IMR-90 (cell line): ENCODE measurements at regions of chr4 and their contacts with region 1.

Region 1: DNA sequence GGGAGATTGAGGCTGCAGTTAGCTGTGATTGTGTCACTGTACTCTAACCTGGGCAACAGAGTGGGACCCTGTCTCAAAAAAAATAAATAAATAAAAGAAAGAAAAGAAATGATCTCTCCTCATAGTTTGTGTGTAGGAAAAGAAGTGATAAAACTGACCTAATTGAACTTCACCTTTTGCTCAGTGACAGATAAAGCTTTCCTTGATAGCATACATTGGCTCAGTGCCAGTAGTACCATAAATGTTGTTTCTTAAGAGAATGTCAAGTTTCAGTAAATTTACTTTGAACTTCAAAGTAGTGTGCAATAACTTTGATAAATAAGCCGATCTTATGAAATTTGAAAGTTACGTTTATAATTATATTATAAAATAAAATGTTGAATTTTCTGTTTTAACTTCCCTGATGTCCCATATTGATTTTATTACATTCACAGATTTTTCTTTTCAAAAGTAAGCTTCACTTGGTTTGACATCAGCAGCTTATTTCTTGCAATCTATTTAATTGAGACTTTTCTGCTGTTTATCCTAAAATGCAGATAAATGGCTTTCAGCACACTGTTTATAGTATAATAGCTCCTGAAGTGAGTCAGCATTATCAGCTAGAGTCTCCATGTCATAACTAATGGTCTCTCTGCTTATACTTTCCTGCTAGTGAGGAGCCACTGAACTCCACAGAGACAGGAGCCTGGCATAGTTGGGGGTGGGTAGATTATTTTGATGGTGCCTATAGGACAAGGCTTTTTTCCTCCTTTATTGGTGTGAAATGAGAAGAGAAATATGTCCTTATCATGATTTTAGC is 330.1 kb downstream of the BMPR1B start:
- DNase-seq: peak; percentile 68
- ATAC-seq: peak; percentile 97
- H3K4me3 ChIP-seq: no peak overlapping the region
- H3K27ac ChIP-seq: no peak overlapping the region
- H3K4me1 ChIP-seq: no peaks in the 10 kb centered on the region
- H3K27me3 ChIP-seq: no peaks in the 10 kb centered on the region
- CTCF ChIP-seq: no peak
- POLR2A ChIP-seq: no peak
- RAD21 ChIP-seq: no peak

Region 2: DNA sequence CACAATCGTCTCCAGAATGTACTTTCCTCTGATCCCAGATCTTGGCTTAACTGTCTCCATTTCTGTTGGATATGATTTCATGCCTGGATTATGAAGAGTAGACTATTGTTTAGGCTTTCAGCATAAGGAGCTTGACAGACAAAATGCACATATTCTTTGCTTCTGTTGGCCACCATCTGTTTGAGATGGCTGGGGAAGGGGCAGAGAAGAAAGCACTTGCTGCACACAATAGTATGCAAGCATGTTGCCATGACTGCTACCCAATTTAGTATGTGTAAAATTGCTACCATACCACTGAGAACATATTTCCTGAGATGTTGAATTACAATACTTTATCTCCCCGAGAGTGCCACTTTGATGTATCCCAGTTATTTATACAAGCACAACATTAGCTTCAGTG is 458.0 kb before region 1 on chr4:
- CTCF ChIA-PET with region 1: no interaction called
- POLR2A ChIA-PET with region 1: no interaction called
- dilution Hi-C with region 1: no loop called
- in situ Hi-C with region 1: no loop called
- intact Hi-C with region 1: no loop called
- DNase-seq: no peak
- ATAC-seq: no peak
- H3K4me3 ChIP-seq: no peak overlapping the region
- H3K27ac ChIP-seq: no peak overlapping the region
- H3K4me1 ChIP-seq: peaks cover 3% of the 10 kb centered on the region; the same call in 1 of the 2 replicates
- H3K27me3 ChIP-seq: no peaks in the 10 kb centered on the region
- CTCF ChIP-seq: no peak
- POLR2A ChIP-seq: no peak
- RAD21 ChIP-seq: no peak

Region 3: DNA sequence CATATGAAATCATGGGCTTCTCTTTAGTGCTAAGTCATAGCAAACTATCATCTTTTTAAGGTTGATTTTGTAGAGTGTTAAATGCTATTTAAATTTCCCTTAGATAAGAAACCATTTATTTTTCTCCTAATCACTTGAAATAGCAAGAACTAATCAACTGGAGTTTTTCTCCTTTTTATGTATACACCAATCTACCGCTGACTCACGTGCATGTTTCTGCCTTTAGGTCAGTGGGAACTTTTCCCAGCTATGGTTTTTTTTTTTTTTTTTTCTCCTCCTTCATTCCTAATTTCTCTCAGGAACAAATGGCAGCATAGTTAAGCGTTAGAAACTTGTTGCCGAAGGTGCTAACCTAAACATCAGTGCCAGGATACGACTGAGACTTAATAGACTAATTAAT is 153.7 kb before region 1 on chr4:
- CTCF ChIA-PET with region 1: no interaction called
- POLR2A ChIA-PET with region 1: no interaction called
- dilution Hi-C with region 1: no loop called
- in situ Hi-C with region 1: no loop called
- intact Hi-C with region 1: loop called (anchors 2 kb)
- DNase-seq: peak; percentile 69
- ATAC-seq: peak; percentile 72
- H3K4me3 ChIP-seq: peak overlapping the region; percentile 39; the same call in 1 of the 2 replicates
- H3K27ac ChIP-seq: no peak overlapping the region
- H3K4me1 ChIP-seq: peaks cover 5% of the 10 kb centered on the region
- H3K27me3 ChIP-seq: no peaks in the 10 kb centered on the region
- CTCF ChIP-seq: no peak
- POLR2A ChIP-seq: no peak
- RAD21 ChIP-seq: no peak

Region 4: GRCh38 chr4:95114521-95114920 is 26.7 kb after region 1 on chr4:
- CTCF ChIA-PET with region 1: no interaction called
- POLR2A ChIA-PET with region 1: no interaction called
- dilution Hi-C with region 1: no loop called
- in situ Hi-C with region 1: no loop called
- intact Hi-C with region 1: no loop called
- DNase-seq: peak; percentile 1
- ATAC-seq: no peak
- H3K4me3 ChIP-seq: no peak overlapping the region
- H3K27ac ChIP-seq: no peak overlapping the region
- H3K4me1 ChIP-seq: no peaks in the 10 kb centered on the region
- H3K27me3 ChIP-seq: peaks cover 3% of the 10 kb centered on the region
- CTCF ChIP-seq: no peak
- POLR2A ChIP-seq: no peak
- RAD21 ChIP-seq: no peak

Region 5: DNA sequence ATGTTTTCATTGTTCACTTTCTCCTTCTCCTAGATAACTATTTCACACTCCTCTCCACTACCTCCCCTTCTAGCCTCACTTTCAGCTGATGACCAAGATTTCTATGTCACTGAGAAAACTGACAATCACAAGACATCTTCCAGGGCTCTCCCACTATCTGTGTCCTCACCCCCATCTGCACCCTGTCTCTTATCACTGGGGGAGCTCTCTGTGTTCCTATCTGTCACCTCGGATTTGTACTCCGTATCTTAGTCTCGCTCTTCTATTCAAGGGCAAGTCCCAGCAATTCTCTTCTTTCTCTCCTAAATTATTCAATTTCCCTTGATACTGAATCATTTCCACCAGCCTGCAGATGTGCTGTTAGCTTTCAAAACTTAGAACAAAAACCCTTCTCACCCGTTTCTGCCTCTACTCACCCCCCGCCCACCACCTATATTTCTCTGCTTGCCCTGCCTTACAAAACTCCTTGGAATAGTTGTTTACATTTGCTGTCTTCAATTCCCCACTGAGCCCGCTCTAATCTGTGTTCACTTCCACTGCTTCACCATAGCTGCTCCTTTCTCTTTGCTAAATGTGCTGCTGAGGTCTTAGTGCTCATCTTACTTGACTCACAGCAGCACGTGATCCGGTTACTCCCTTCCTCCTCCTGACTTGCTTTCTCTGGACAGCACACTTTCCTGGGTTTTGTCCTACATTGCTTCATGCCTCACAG is 167.7 kb after region 1 on chr4:
- CTCF ChIA-PET with region 1: no interaction called
- POLR2A ChIA-PET with region 1: no interaction called
- dilution Hi-C with region 1: no loop called
- in situ Hi-C with region 1: no loop called
- intact Hi-C with region 1: no loop called
- DNase-seq: peak; percentile 77
- ATAC-seq: peak; percentile 93
- H3K4me3 ChIP-seq: no peak overlapping the region
- H3K27ac ChIP-seq: no peak overlapping the region
- H3K4me1 ChIP-seq: no peaks in the 10 kb centered on the region
- H3K27me3 ChIP-seq: no peaks in the 10 kb centered on the region
- CTCF ChIP-seq: no peak
- POLR2A ChIP-seq: no peak
- RAD21 ChIP-seq: no peak

Region 6: DNA sequence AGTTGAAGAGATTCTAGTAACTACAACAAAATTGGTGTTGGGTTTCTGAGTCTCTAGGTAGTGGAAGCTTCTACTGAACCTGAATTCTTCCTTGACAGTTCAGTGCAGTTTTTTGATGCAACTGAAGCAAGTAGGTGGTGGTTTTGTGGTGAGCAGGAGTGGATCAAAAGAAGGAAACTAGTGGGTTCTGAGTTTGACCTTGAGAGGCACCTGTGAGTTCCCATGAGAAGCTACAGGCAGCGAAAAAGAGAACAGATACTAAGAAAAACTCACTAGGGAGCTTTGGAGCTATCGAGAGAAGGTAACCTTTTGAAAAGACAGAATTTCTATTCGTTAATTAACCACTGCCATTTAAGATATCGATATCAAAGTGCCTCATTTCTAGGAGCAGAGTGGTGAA is 897.2 kb after region 1 on chr4:
- CTCF ChIA-PET with region 1: no interaction called
- POLR2A ChIA-PET with region 1: no interaction called
- dilution Hi-C with region 1: no loop called
- in situ Hi-C with region 1: no loop called
- intact Hi-C with region 1: no loop called
- DNase-seq: no peak
- ATAC-seq: no peak
- H3K4me3 ChIP-seq: no peak overlapping the region
- H3K27ac ChIP-seq: no peak overlapping the region
- H3K4me1 ChIP-seq: no peaks in the 10 kb centered on the region
- H3K27me3 ChIP-seq: no peaks in the 10 kb centered on the region
- CTCF ChIP-seq: no peak
- POLR2A ChIP-seq: no peak
- RAD21 ChIP-seq: no peak